ENCODE measurements at regions of chr1 and their contacts with region 1.

Region 1: DNA sequence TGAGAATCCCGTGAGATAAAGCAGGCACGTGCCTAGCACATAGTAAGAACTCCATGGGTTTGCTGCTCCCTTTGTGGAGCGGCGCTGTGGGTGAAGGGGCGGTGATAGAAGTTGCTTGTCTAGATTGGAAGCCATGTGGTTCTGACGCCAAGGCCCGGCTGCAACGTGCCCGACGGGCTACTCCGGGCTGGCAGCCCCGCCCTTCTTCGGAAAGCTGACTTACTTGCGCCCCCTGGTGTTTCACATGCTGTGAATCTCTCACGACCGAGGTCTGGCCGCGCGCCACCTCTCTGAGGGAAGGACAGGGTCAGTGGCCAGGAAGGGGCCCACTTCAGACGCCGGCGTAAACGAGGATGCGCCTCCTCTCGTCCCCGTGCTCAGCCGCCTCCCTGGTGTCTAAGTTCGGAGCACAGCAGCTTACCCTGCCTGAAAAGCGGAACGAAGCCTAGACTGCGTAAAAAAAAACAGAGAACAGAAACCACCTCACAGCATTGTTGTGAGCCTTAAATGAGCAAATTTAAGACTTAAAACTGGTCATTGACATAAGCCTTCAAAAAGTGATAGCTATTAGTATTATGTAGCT is 42.6 kb upstream of the WNT2B start:
- DNase-seq: peak; percentile 77 to 98
- H3K4me3 ChIP-seq: peak overlapping the region; percentile 48 to 59
- H3K27ac ChIP-seq: peak overlapping the region; percentile 67 to 72
- H3K4me1 ChIP-seq: peaks cover 5 to 7% of the 10 kb centered on the region in 2 donors
- H3K27me3 ChIP-seq: no peaks in the 10 kb centered on the region
- CTCF ChIP-seq: peak; percentile 88 to 96 (median 89)

Region 2: GRCh38 chr1:112390775-112391602 is 75.2 kb before region 1 on chr1:
- intact Hi-C with region 1: loop called (anchors 1 kb)
- DNase-seq: peak; percentile 71 to 97
- H3K4me3 ChIP-seq: peak overlapping the region; percentile 48 to 64
- H3K27ac ChIP-seq: peak overlapping the region; percentile 92 to 98
- H3K4me1 ChIP-seq: peaks cover 8 to 45% of the 10 kb centered on the region in 2 donors
- H3K27me3 ChIP-seq: no peaks in the 10 kb centered on the region
- CTCF ChIP-seq: peak; percentile 90 to 96 (median 91)